ENCODE measurements at regions of chr1 and their contacts with region 1.

Region 1: DNA sequence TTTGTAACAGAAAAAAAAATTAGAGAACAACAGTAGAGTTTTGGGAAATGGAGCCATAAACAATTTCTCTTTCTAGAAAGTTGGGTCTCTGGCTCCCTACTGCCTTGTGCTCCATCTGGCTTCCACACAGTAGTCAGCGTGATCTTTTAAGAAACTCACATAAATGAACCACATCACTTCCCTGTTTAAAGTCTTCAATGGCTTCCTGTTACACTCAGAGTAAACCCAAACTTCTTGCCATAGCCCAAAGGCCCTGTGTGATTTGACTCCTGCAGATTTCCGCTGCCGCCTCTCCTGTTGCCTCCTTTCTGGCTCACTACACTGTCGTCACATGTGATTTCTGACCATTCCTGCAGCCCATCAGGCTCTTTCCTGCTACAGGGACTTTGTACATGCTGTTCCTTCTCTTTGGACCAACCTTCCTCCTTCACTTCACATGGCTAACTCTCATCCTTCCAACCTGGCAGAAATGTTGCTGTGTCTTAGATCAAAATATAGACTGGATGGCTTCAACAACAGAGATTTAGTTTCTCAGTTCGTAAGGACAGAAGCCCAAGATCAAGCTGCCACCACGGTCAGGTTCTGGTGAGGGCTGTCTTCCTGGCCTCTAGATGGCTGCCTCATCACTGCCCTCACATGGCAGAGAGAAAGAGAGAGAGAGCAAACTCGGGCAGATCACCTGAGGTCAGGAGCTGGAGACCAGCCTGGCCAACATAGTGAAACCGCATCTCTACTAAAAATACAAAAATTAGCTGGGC is 34.0 kb downstream of the OPRD1 start:
- DNase-seq: peak; percentile 41
- ATAC-seq: peak; percentile 98
- H3K4me3 Mint-ChIP-seq: no peak overlapping the region
- H3K27ac Mint-ChIP-seq: peak overlapping the region; percentile 47
- H3K4me1 Mint-ChIP-seq: peaks cover 4% of the 10 kb centered on the region
- H3K27me3 Mint-ChIP-seq: no peaks in the 10 kb centered on the region
- CTCF ChIP-seq: no peak

Region 2: GRCh38 chr1:28782011-28782410 is 64.0 kb before region 1 on chr1:
- CTCF ChIA-PET with region 1: interaction called, 28 read pairs
- POLR2A ChIA-PET with region 1: no interaction called
- DNase-seq: no peak
- ATAC-seq: no peak
- H3K4me3 Mint-ChIP-seq: no peak overlapping the region
- H3K27ac Mint-ChIP-seq: no peak overlapping the region
- H3K4me1 Mint-ChIP-seq: peaks cover 9% of the 10 kb centered on the region
- H3K27me3 Mint-ChIP-seq: no peaks in the 10 kb centered on the region; the same call in 1 of the 2 replicates
- CTCF ChIP-seq: no peak

Region 3: DNA sequence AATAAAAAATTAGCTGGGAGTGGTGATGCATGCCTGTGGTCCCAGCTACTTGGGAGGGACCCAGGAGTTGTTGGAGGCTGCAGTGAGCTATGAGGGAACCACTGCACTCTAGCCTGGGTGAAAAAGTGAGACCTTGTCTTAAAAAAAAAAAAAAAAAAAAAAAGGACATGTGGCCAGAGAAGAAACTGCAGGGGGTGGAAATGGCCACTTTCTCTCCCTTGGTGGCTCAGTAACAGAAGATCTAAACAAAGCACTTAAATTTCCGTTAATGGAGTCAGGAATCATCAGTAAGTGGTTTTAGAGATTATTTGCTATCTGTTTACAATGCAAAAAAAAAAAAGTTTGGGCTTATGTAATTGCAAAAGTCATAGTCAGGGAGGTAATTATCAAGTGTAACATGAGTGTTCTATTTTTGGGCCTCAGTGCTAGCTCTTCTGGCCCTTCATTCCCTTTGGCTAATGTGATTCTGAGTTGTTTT is 53.3 kb before region 1 on chr1:
- CTCF ChIA-PET with region 1: interaction called, 16 read pairs
- POLR2A ChIA-PET with region 1: interaction called, 3 read pairs
- DNase-seq: no peak
- ATAC-seq: no peak
- H3K4me3 Mint-ChIP-seq: no peak overlapping the region
- H3K27ac Mint-ChIP-seq: no peak overlapping the region
- H3K4me1 Mint-ChIP-seq: peaks cover 19% of the 10 kb centered on the region
- H3K27me3 Mint-ChIP-seq: no peaks in the 10 kb centered on the region; the same call in 1 of the 2 replicates
- CTCF ChIP-seq: no peak

Region 4: GRCh38 chr1:28811766-28812668 is 33.9 kb before region 1 on chr1 and contains the start of gene OPRD1:
- CTCF ChIA-PET with region 1: interaction called, 12 read pairs
- POLR2A ChIA-PET with region 1: no interaction called
- DNase-seq: peak; percentile 54
- ATAC-seq: peak; percentile 58
- H3K4me3 Mint-ChIP-seq: peak within 1 kb of the TSS; percentile 61
- H3K27ac Mint-ChIP-seq: no peak within 1 kb of the TSS
- H3K4me1 Mint-ChIP-seq: peaks cover 19% of the 10 kb centered on the region
- H3K27me3 Mint-ChIP-seq: peaks cover 43% of the 10 kb centered on the region
- CTCF ChIP-seq: no peak
- total RNA-seq, gene OPRD1: 2.2 to 3.1 TPM (median 2.5 TPM) in 3 replicates

Region 5: DNA sequence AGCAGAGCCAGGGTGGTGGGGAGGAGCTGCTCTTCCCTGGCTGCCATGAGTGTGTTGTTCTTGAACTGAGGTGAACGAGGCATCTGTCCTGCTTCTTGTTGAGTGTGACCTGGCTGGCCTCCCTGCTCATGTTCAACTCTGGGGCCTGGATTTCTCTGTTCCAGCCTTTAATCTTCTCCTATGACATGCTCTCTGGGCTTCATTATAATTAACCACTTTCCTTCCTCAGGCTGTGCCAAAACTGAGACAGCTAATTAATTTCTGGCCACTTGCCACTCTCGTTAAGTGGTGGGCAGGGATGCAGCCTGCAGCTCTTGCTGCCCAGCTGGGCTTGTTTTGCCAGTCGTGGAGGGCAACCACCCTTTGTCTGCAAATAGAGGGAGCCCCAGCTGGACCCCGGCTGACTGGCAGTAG is 10.7 kb before region 1 on chr1:
- CTCF ChIA-PET with region 1: interaction called, 21 read pairs
- POLR2A ChIA-PET with region 1: no interaction called
- DNase-seq: no peak
- ATAC-seq: no peak
- H3K4me3 Mint-ChIP-seq: no peak overlapping the region
- H3K27ac Mint-ChIP-seq: peak overlapping the region; percentile 33; the same call in 1 of the 2 replicates
- H3K4me1 Mint-ChIP-seq: no peaks in the 10 kb centered on the region
- H3K27me3 Mint-ChIP-seq: no peaks in the 10 kb centered on the region
- CTCF ChIP-seq: no peak

Region 6: DNA sequence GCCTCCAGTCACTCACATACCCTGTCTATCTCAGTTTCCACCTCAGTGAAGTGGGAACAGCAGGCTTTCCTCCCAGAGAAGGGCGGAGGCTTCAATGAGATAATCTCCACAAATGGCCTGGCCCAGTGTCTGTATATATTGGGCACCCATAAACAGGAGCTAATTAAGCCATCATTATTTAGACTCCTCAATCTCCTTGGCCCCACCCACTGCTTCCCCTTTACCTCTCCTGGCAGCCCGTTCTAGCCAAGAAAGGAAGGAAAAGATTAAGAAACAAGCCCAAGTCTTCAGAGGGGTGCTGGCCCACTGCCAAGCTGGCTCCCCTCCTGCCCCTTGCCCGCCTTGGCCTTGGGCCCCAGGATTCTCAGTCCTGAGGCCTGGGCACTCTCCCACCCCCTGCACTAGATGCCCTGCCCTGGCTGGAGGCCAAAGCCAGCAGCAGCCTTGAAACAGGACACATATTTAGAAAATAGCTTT is 52.5 kb after region 1 on chr1:
- CTCF ChIA-PET with region 1: no interaction called
- POLR2A ChIA-PET with region 1: no interaction called
- DNase-seq: no peak
- ATAC-seq: no peak
- H3K4me3 Mint-ChIP-seq: no peak overlapping the region
- H3K27ac Mint-ChIP-seq: no peak overlapping the region
- H3K4me1 Mint-ChIP-seq: peaks cover 13% of the 10 kb centered on the region
- H3K27me3 Mint-ChIP-seq: no peaks in the 10 kb centered on the region
- CTCF ChIP-seq: no peak

Region 7: DNA sequence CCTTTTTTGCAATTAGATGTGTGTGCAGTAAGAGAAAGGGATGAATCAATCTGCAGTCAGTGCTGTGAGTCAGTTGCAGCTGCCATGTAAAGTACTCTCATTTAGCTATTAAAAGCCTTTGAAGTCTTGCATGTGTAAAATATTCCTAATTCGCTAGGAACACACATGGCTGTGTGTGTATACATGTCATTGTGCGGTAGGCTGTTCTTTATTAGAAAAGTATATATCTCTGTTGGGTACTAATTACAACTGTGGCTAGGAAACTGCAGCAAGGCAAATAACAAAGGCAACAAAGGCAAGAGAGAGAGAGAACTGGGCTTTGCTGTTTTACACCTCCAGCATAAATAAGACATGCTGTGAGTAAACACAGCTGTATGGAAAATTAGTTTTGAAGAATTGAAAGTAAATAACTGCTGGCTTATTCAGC is 110.1 kb after region 1 on chr1:
- CTCF ChIA-PET with region 1: no interaction called
- POLR2A ChIA-PET with region 1: no interaction called
- DNase-seq: no peak
- ATAC-seq: no peak
- H3K4me3 Mint-ChIP-seq: no peak overlapping the region
- H3K27ac Mint-ChIP-seq: no peak overlapping the region
- H3K4me1 Mint-ChIP-seq: peaks cover 27% of the 10 kb centered on the region
- H3K27me3 Mint-ChIP-seq: no peaks in the 10 kb centered on the region
- CTCF ChIP-seq: no peak

Region 8: DNA sequence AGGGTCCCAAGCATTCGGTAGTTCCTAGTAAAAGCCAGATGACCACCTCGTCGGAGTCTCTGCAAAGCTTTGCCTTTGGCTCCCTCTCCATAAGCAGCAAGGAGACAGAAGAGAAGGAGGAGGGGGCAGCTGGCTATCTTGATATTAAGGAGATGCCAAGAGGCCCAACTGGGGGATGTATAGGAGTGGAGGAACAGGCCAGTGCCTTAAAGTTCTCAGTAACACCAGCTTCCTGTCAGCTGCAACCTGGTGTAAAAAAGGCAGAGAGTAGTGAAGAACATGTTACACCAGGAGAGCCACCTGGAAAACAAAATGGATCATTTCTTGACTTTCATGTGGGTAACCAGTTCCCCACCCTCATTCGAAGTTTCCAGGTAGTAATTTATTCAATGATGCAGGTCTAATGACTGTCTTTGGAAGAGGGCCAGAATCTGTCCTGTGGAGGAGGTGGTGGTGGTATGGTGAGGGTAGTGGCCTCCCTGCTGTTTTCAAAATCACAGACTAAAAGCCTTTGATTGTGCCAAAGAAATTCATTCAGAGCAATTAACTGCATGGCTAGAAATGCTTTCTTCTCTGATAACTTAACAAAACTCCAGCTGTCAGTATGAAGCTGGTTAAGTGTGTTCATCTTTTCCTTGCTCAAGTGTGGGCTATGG is 250.4 kb after region 1 on chr1:
- CTCF ChIA-PET with region 1: no interaction called
- POLR2A ChIA-PET with region 1: no interaction called
- DNase-seq: no peak
- ATAC-seq: peak; percentile 63
- H3K4me3 Mint-ChIP-seq: no peak overlapping the region
- H3K27ac Mint-ChIP-seq: no peak overlapping the region
- H3K4me1 Mint-ChIP-seq: peaks cover 15% of the 10 kb centered on the region
- H3K27me3 Mint-ChIP-seq: no peaks in the 10 kb centered on the region
- CTCF ChIP-seq: no peak